Heart right ventricle (tissue), 16 donors: ENCODE measurements at regions of chr6 and their contacts with region 1.

Region 1: GRCh38 chr6:134174672-134175198 is 122.3 kb upstream of the SLC2A12 start:
- DNase-seq: peak; percentile 95
- ATAC-seq: peak; percentile 85 to 96 (median 91)
- H3K4me3 ChIP-seq: peak overlapping the region; percentile 66 to 85 (median 78)
- H3K27ac ChIP-seq: peak overlapping the region; percentile 97 to 100 (median 98)
- H3K4me1 ChIP-seq: peaks cover 2 to 77% (median 59%) of the 10 kb centered on the region in 9 donors
- H3K27me3 ChIP-seq: no peaks in the 10 kb centered on the region
- CTCF ChIP-seq: peak in 1 of 9 donors; percentile 1

Region 2: DNA sequence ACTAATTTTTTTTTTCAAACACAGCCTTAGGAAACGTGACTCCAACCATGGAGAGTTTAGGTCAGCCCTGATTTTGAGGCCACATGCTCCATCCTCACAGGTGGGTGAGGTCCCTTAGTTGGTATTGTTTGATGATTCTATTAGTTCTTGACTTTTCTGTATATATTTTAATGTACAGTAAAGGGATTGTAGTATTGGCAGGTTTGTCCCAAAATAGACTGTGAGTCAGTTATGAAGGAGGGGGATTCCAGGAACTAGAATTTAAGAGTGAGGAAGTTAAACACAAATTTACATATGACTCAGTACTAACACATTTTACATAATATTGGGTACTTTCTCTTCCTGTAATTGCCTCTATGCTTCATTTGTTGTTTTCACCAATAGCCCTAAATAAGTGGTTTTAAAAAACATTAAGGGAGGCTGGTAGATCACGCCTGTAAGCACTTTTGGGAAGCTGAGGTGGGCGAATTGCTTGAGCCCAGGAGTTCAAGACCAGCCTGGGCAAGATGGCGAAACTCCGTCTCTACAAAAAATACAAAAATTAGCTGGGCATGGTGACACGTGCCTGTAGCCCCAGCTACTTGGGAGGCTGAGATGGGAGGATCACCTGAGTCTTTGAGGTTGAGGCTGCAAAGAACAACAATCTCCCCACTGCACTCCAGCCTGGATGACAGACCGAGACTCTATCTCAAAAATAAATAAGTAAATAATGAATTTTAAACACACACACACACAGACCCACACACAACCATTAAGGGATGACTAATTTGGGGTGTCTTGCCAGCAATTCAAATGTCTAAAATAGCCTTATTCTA is 61.4 kb after region 1 on chr6:
- intact Hi-C with region 1: loop called in 1 of 10 experiments (anchors 5 kb)
- DNase-seq: no peak
- ATAC-seq: peak in 1 of 8 donors; percentile 21
- H3K4me3 ChIP-seq: no peak overlapping the region
- H3K27ac ChIP-seq: peak overlapping the region in 4 of 10 donors; percentile 1 to 81 (median 19)
- H3K4me1 ChIP-seq: peaks cover 0 to 59% (median 22%) of the 10 kb centered on the region in 9 donors
- H3K27me3 ChIP-seq: no peaks in the 10 kb centered on the region
- CTCF ChIP-seq: no peak

Region 3: GRCh38 chr6:134416418-134417154 is 241.9 kb after region 1 on chr6:
- intact Hi-C with region 1: loop called in 2 of 10 experiments (anchors 5 kb)
- DNase-seq: no peak
- ATAC-seq: no peak
- H3K4me3 ChIP-seq: no peak overlapping the region
- H3K27ac ChIP-seq: peak overlapping the region in 1 of 10 donors; percentile 24
- H3K4me1 ChIP-seq: peaks cover 0 to 49% (median 8%) of the 10 kb centered on the region in 9 donors
- H3K27me3 ChIP-seq: no peaks in the 10 kb centered on the region
- CTCF ChIP-seq: no peak

Region 4: GRCh38 chr6:134517145-134517658 is 342.5 kb after region 1 on chr6:
- intact Hi-C with region 1: loop called in 7 of 10 experiments (anchors 1 to 10 kb)
- DNase-seq: peak; percentile 72 to 84
- ATAC-seq: peak; percentile 84 to 96 (median 94)
- H3K4me3 ChIP-seq: peak overlapping the region in 6 of 10 donors; percentile 1 to 25 (median 12)
- H3K27ac ChIP-seq: peak overlapping the region; percentile 8 to 89 (median 74)
- H3K4me1 ChIP-seq: peaks cover 0 to 65% (median 51%) of the 10 kb centered on the region in 9 donors
- H3K27me3 ChIP-seq: no peaks in the 10 kb centered on the region
- CTCF ChIP-seq: no peak

Region 5: GRCh38 chr6:134640975-134641429 is 466.3 kb after region 1 on chr6:
- intact Hi-C with region 1: loop called in 9 of 10 experiments (anchors 1 to 5 kb)
- DNase-seq: peak; percentile 62 to 86
- ATAC-seq: peak; percentile 73 to 92 (median 88)
- H3K4me3 ChIP-seq: no peak overlapping the region
- H3K27ac ChIP-seq: peak overlapping the region in 5 of 10 donors; percentile 3 to 61 (median 6)
- H3K4me1 ChIP-seq: peaks cover 0 to 28% (median 9%) of the 10 kb centered on the region in 9 donors
- H3K27me3 ChIP-seq: no peaks in the 10 kb centered on the region
- CTCF ChIP-seq: peak; percentile 81 to 98 (median 96)

Region 6: GRCh38 chr6:134720353-134721059 is 545.8 kb after region 1 on chr6:
- intact Hi-C with region 1: loop called in 3 of 10 experiments (anchors 2 to 10 kb)
- DNase-seq: peak in 1 of 2 donors; percentile 59
- ATAC-seq: peak; percentile 67 to 85 (median 80)
- H3K4me3 ChIP-seq: no peak overlapping the region
- H3K27ac ChIP-seq: peak overlapping the region; percentile 23 to 87 (median 73)
- H3K4me1 ChIP-seq: peaks cover 8 to 79% (median 49%) of the 10 kb centered on the region in 9 donors
- H3K27me3 ChIP-seq: no peaks in the 10 kb centered on the region
- CTCF ChIP-seq: no peak

Region 7: DNA sequence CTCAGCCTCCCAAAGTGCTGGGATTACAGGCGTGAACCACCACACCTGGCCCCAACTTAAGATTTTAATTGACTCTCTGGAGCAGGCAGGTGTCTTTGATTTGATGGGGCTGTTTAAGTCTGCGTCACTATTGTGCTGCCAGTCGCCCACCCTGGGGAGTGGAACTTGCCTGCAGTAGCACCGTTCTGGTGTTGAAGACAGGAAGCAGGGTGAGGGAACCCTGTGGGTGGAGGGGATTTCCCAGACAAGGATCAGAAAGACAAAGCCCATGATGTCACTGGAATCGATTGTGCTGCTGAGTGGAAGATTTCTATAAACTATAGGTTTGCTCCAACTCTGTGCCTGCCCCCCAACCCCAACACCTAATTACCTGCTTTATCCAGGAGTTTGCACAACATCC is 764.2 kb after region 1 on chr6:
- intact Hi-C with region 1: loop called in 2 of 10 experiments (anchors 5 kb)
- DNase-seq: no peak
- ATAC-seq: no peak
- H3K4me3 ChIP-seq: no peak overlapping the region
- H3K27ac ChIP-seq: no peak overlapping the region
- H3K4me1 ChIP-seq: no peaks in the 10 kb centered on the region
- H3K27me3 ChIP-seq: no peaks in the 10 kb centered on the region
- CTCF ChIP-seq: no peak